SK-N-SH (cell line): ENCODE measurements at regions of chr9 and their contacts with region 1.

Region 1: DNA sequence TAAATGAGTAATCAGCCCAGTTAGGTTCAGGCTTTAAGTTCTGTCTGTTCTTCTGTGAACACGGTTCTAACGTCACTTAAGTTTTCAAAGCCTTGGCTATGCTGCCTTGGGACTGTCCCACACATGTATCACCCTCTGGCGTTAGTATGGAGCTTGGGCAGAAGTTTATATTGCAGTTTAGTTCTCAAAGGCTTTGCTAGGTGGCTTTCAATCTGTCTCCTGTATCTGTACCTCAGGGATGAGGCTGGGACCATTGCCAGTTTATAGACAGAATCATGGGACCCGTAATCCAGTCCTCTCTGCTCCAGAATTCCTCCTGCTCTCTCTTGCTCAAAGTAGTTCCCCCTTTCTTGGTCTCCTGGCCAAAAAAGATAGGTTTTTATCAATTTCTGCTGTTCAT is 12.1 kb downstream of the C9orf40 start:
- DNase-seq: no peak
- H3K4me3 ChIP-seq: no peak overlapping the region
- H3K27ac ChIP-seq: no peak overlapping the region
- H3K4me1 ChIP-seq: no peaks in the 10 kb centered on the region
- H3K27me3 ChIP-seq: peaks cover 12% of the 10 kb centered on the region; the same call in 1 of the 2 replicates
- CTCF ChIP-seq: no peak
- EP300 ChIP-seq: no peak
- RAD21 ChIP-seq: no peak

Region 2: DNA sequence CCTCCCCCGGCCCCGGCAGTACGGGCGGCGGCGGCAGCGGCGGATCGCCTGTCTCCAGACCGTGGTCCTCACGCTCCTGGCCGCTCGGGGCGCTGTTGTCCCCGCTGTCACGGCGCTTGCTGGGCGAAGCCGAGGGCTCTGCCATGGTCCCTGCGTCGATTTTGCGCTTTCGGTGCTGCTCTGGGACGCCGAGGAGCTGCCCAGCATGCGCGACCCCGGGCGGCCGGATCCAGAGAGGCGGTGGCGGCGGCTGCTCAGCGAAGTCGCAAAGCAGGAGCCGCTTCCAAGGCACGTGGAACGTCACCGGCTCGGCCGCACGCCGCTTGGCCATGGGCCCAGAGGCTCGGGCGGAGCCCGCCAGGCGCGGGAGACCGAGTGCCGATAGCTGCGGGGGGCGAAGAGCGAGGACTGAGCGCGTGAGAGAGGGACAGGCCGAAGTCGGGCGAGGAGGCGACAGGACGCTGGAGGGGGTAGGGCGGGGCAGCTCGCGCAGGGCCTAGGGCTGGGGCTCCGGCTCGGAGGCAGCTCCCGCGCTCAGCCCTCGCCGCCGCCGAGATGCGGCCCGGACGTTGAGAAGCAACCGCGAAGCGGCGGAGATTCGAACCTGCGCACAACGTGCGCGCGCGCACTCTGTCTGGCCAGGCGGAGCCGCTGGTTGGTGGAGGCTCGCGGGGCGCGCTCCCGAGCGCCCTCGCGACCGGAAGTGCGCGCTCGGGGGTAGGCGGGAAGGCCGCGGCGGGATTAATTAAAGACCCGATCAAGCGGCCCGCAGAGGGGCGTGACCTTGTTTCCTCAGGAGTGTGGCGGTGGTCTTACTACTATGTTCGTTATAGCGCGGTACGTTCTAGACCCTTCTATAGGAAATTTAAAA is 11.9 kb after region 1 on chr9 and contains the start of gene C9orf40:
- CTCF ChIA-PET with region 1: interaction called, 30 read pairs
- POLR2A ChIA-PET with region 1: no interaction called
- DNase-seq: peak; percentile 92
- H3K4me3 ChIP-seq: peak within 1 kb of the TSS; percentile 85 to 97
- H3K27ac ChIP-seq: peak within 1 kb of the TSS; percentile 68 to 74
- H3K4me1 ChIP-seq: no peaks in the 10 kb centered on the region; a peak in 1 of 4 replicates
- H3K27me3 ChIP-seq: no peaks in the 10 kb centered on the region
- CTCF ChIP-seq: peak; percentile 72
- EP300 ChIP-seq: no peak
- RAD21 ChIP-seq: peak; percentile 33
- polyA plus RNA-seq, gene C9orf40: 2.0 TPM in 2 replicates